ENCODE measurements at regions of chr15 and their contacts with region 1.

Region 1: DNA sequence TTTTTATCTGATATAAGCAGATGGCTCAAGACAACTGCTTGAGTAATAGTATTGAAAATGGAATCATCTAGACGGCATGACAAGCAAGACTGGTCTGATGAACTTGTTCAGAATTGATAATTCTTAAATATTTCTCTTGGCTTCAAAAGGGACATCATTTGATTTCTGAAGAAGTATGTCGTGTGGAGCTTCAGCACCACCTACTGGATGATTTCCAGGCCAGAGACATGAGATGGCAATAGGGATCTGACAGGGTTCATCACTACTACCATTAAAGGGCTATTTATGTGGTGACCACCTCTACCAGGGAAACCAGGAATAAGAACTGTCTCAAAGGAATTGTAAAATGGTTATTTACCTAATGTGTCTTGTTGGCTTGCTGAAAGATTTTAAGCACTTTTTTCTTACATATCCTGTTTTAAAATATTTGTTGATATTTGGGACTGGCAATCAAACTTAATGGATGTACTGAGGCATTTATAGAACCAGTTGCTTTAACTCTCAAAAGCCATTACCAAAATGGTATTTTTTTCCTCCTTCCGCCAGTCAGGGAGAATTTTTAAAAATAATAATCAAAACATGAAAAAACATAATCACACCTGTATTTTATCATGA is 99.5 kb upstream of the FAM98B start:
- H3K4me3 Mint-ChIP-seq: no peak overlapping the region
- H3K27ac Mint-ChIP-seq: no peak overlapping the region
- H3K4me1 Mint-ChIP-seq: peaks cover 12% of the 10 kb centered on the region
- H3K27me3 Mint-ChIP-seq: no peaks in the 10 kb centered on the region

Region 2: GRCh38 chr15:38283010-38283409 is 71.4 kb before region 1 on chr15:
- intact Hi-C with region 1: loop called (anchors 10 kb)
- H3K4me3 Mint-ChIP-seq: no peak overlapping the region
- H3K27ac Mint-ChIP-seq: peak overlapping the region; percentile 37
- H3K4me1 Mint-ChIP-seq: peaks cover 46% of the 10 kb centered on the region
- H3K27me3 Mint-ChIP-seq: no peaks in the 10 kb centered on the region

Measured in dendritic cell treated with granulocyte-macrophage colony-stimulating factor and Interleukin-4, amounts not matched to agents 40 ng/mL and 50 ng/mL, for 4 days (primary cell).